Activated naive CD4-positive, alpha-beta T cell treated with anti-CD3 and anti-CD28 coated beads for 36 hours (primary cell): ENCODE measurements at regions of chr22 and their contacts with region 1.

Region 1: DNA sequence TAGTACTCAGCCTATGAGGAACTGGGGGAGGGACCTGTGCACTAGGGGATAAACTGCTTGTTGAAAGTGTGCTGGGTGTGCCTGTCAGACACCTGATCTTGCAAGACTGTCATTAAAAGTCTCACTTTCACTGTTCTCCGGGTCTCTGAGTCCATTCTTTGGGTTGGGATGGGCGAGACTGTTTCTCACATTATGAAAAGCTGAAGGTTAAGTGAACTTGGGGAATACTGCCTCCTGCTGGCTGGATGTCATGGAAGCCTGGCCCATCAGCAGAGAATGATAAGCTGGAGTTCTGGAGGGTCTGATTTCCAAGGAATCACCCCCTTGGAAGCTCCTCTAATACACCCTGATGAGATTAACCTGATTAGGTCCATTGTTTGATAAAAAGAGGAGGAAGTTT is 9.0 kb upstream of the VPREB1 start:
- DNase-seq: peak; percentile 84
- H3K4me3 Mint-ChIP-seq: no peak overlapping the region
- H3K27ac Mint-ChIP-seq: no peak overlapping the region
- H3K4me1 Mint-ChIP-seq: peaks cover 2% of the 10 kb centered on the region
- H3K27me3 Mint-ChIP-seq: no peaks in the 10 kb centered on the region

Region 2: GRCh38 chr22:22156716-22157347 is 78.7 kb before region 1 on chr22:
- CTCF ChIA-PET with region 1: interaction called, 4 read pairs
- intact Hi-C with region 1: loop called (anchors 1 kb)
- DNase-seq: peak; percentile 87
- H3K4me3 Mint-ChIP-seq: no peak overlapping the region
- H3K27ac Mint-ChIP-seq: peak overlapping the region; percentile 17
- H3K4me1 Mint-ChIP-seq: peaks cover 7% of the 10 kb centered on the region
- H3K27me3 Mint-ChIP-seq: peaks cover 3% of the 10 kb centered on the region

Region 3: GRCh38 chr22:22195265-22196017 is 40.1 kb before region 1 on chr22:
- CTCF ChIA-PET with region 1: interaction called, 95 read pairs
- intact Hi-C with region 1: no loop called
- DNase-seq: peak; percentile 92
- H3K4me3 Mint-ChIP-seq: no peak overlapping the region
- H3K27ac Mint-ChIP-seq: no peak overlapping the region
- H3K4me1 Mint-ChIP-seq: no peaks in the 10 kb centered on the region
- H3K27me3 Mint-ChIP-seq: peaks cover 3% of the 10 kb centered on the region

Region 4: GRCh38 chr22:22201185-22201929 is 34.2 kb before region 1 on chr22:
- CTCF ChIA-PET with region 1: interaction called, 179 read pairs
- intact Hi-C with region 1: no loop called
- DNase-seq: peak; percentile 82
- H3K4me3 Mint-ChIP-seq: no peak overlapping the region
- H3K27ac Mint-ChIP-seq: no peak overlapping the region
- H3K4me1 Mint-ChIP-seq: peaks cover 4% of the 10 kb centered on the region
- H3K27me3 Mint-ChIP-seq: no peaks in the 10 kb centered on the region

Region 5: GRCh38 chr22:22215659-22216449 is 19.7 kb before region 1 on chr22:
- CTCF ChIA-PET with region 1: interaction called, 179 read pairs
- intact Hi-C with region 1: no loop called
- DNase-seq: no peak
- H3K4me3 Mint-ChIP-seq: no peak overlapping the region
- H3K27ac Mint-ChIP-seq: no peak overlapping the region
- H3K4me1 Mint-ChIP-seq: peaks cover 11% of the 10 kb centered on the region
- H3K27me3 Mint-ChIP-seq: peaks cover 5% of the 10 kb centered on the region

Region 6: GRCh38 chr22:22403771-22404170 is 168.2 kb after region 1 on chr22:
- CTCF ChIA-PET with region 1: no interaction called
- intact Hi-C with region 1: no loop called
- DNase-seq: no peak
- H3K4me3 Mint-ChIP-seq: no peak overlapping the region
- H3K27ac Mint-ChIP-seq: no peak overlapping the region
- H3K4me1 Mint-ChIP-seq: no peaks in the 10 kb centered on the region
- H3K27me3 Mint-ChIP-seq: peaks cover 7% of the 10 kb centered on the region